GM12878 (cell line): ENCODE measurements at regions of chr4 and their contacts with region 1.

Region 1: GRCh38 chr4:128863312-128864075 is 54.0 kb downstream of the JADE1 start:
- DNase-seq: no peak
- ATAC-seq: peak; percentile 73
- H3K4me3 ChIP-seq: no peak overlapping the region; the same call in 1 of the 2 replicates
- H3K27ac ChIP-seq: peak overlapping the region; percentile 84
- H3K4me1 ChIP-seq: peaks cover 36% of the 10 kb centered on the region
- H3K27me3 ChIP-seq: no peaks in the 10 kb centered on the region
- CTCF ChIP-seq: peak; percentile 73 to 83 (median 81)
- EP300 ChIP-seq: no peak
- POLR2A ChIP-seq: no peak
- RAD21 ChIP-seq: peak; percentile 75

Region 2: DNA sequence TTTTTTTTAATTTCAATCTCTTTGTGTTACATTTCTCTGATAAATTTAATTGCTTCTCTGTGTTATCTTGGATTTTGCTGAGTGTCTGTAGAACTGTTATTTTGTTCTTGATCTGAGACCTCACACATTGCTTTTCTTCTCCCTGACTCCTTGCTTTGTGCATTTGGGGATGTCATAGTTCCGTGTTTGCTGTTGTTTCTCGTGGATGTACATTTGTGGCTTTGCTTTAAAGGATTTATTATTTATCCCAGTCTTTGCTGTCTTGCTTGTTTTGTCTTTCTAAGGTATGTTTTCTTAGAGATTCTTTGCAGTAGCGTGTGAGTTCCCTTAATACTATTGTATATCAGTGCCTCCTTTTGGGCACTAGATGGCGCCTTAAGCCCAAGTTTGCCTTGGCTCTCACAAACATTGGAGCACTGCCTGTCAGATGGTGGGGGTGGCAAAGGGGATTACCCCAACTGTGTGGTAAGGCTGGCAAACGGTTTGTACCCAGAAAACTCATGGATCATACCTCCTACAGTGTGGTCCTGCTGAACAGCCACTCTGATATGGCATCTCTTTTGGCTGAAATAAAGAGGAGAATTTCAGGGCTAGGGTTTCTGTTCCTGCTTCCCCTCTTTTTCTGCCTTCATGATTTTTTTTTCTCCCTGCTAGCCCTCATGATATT is 672.2 kb before region 1 on chr4:
- CTCF ChIA-PET with region 1: interaction called, 4 read pairs
- POLR2A ChIA-PET with region 1: no interaction called
- RAD21 ChIA-PET with region 1: no interaction called
- SMC1A ChIA-PET with region 1: interaction called, 4 read pairs
- in situ Hi-C with region 1: loop called (anchors 5 kb)
- intact Hi-C with region 1: loop called (anchors 1 kb)
- DNase-seq: peak; percentile 54
- ATAC-seq: peak; percentile 100
- H3K4me3 ChIP-seq: no peak overlapping the region
- H3K27ac ChIP-seq: no peak overlapping the region
- H3K4me1 ChIP-seq: peaks cover 2% of the 10 kb centered on the region; the same call in 1 of the 2 replicates
- H3K27me3 ChIP-seq: no peaks in the 10 kb centered on the region
- CTCF ChIP-seq: peak; percentile 79 to 97 (median 91); a peak in 5 of 6 replicates
- EP300 ChIP-seq: no peak
- POLR2A ChIP-seq: no peak
- RAD21 ChIP-seq: peak; percentile 94

Region 3: DNA sequence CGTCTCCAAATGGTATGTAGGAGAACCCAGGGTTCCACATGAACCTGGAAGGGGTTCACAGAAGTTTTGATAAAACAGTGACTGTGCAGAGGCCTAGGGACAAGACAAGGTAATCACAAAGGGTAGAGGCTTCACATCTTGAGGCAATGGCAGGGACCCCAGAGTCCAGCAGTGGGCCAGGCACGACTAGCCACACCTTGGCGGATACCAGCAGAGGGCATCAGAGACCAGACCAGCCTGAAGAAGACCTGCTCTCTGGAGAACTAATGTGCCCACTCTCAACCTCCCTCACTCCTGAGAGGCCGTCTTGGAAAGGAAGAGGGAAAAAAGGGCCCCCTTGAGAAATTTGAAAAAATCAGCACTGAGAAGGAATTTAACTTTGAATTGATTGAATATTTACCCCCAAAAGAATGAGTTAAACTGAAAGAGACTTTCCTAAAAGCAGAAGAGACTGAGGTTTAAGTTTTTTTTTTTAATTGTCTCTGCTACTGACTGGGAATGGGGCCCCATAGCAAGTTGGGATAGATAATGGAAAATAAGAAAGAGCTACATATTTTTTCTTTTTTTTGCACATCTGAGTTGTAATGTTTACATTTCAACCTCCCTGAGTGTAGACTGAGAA is 297.8 kb before region 1 on chr4:
- CTCF ChIA-PET with region 1: interaction called, 3 read pairs
- POLR2A ChIA-PET with region 1: no interaction called
- RAD21 ChIA-PET with region 1: no interaction called
- SMC1A ChIA-PET with region 1: no interaction called
- in situ Hi-C with region 1: loop called (anchors 5 kb)
- intact Hi-C with region 1: no loop called
- DNase-seq: no peak
- ATAC-seq: peak; percentile 92
- H3K4me3 ChIP-seq: no peak overlapping the region
- H3K27ac ChIP-seq: no peak overlapping the region
- H3K4me1 ChIP-seq: no peaks in the 10 kb centered on the region
- H3K27me3 ChIP-seq: no peaks in the 10 kb centered on the region; a peak in 1 of 4 replicates
- CTCF ChIP-seq: peak; percentile 49 to 71 (median 55)
- EP300 ChIP-seq: no peak
- POLR2A ChIP-seq: no peak
- RAD21 ChIP-seq: peak; percentile 69

Region 4: DNA sequence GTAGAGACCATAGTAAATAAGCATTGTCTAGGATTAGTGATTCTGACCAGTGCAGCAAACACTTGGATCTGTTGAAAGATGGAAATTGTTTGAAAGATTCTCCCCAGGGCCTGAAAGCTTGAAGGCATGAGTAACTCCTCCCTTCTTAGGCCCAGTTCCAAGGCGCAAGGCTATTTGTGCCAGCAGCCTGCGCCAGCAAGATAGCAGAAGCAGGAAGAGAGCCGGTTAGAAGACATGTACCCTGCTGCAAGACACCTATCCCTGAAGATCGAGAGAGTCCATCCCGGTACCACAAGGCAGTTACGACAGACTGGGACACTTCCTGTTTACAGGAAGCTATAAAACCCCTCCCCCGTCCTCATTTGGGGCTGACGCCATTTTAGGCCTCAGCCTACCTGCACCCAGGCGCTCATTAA is 126.4 kb before region 1 on chr4:
- CTCF ChIA-PET with region 1: no interaction called
- POLR2A ChIA-PET with region 1: no interaction called
- RAD21 ChIA-PET with region 1: no interaction called
- SMC1A ChIA-PET with region 1: no interaction called
- in situ Hi-C with region 1: no loop called
- intact Hi-C with region 1: no loop called
- DNase-seq: no peak
- ATAC-seq: no peak
- H3K4me3 ChIP-seq: no peak overlapping the region
- H3K27ac ChIP-seq: no peak overlapping the region
- H3K4me1 ChIP-seq: no peaks in the 10 kb centered on the region
- H3K27me3 ChIP-seq: no peaks in the 10 kb centered on the region
- CTCF ChIP-seq: no peak
- EP300 ChIP-seq: no peak
- POLR2A ChIP-seq: no peak
- RAD21 ChIP-seq: no peak

Region 5: GRCh38 chr4:128782076-128782715 is 81.3 kb before region 1 on chr4:
- CTCF ChIA-PET with region 1: interaction called, 10 read pairs
- POLR2A ChIA-PET with region 1: no interaction called
- RAD21 ChIA-PET with region 1: no interaction called
- SMC1A ChIA-PET with region 1: interaction called, 6 read pairs
- in situ Hi-C with region 1: no loop called
- intact Hi-C with region 1: loop called (anchors 1 kb)
- DNase-seq: no peak
- ATAC-seq: peak; percentile 88
- H3K4me3 ChIP-seq: no peak overlapping the region
- H3K27ac ChIP-seq: no peak overlapping the region
- H3K4me1 ChIP-seq: no peaks in the 10 kb centered on the region
- H3K27me3 ChIP-seq: no peaks in the 10 kb centered on the region
- CTCF ChIP-seq: peak; percentile 35 to 66 (median 47); a peak in 5 of 6 replicates
- EP300 ChIP-seq: no peak
- POLR2A ChIP-seq: no peak
- RAD21 ChIP-seq: peak; percentile 69

Region 6: GRCh38 chr4:128823025-128823661 is 40.4 kb before region 1 on chr4:
- CTCF ChIA-PET with region 1: interaction called, 14 read pairs
- POLR2A ChIA-PET with region 1: interaction called, 4 read pairs
- RAD21 ChIA-PET with region 1: interaction called, 9 read pairs
- SMC1A ChIA-PET with region 1: interaction called, 18 read pairs
- in situ Hi-C with region 1: no loop called
- intact Hi-C with region 1: no loop called
- DNase-seq: no peak
- ATAC-seq: no peak
- H3K4me3 ChIP-seq: no peak overlapping the region
- H3K27ac ChIP-seq: no peak overlapping the region
- H3K4me1 ChIP-seq: peaks cover 41% of the 10 kb centered on the region
- H3K27me3 ChIP-seq: no peaks in the 10 kb centered on the region
- CTCF ChIP-seq: no peak
- EP300 ChIP-seq: no peak
- POLR2A ChIP-seq: no peak
- RAD21 ChIP-seq: no peak

Region 7: GRCh38 chr4:128831531-128832242 is 31.8 kb before region 1 on chr4:
- CTCF ChIA-PET with region 1: interaction called, 14 read pairs
- POLR2A ChIA-PET with region 1: interaction called, 4 read pairs
- RAD21 ChIA-PET with region 1: interaction called, 17 read pairs
- SMC1A ChIA-PET with region 1: interaction called, 18 read pairs
- in situ Hi-C with region 1: no loop called
- intact Hi-C with region 1: no loop called
- DNase-seq: no peak
- ATAC-seq: peak; percentile 82
- H3K4me3 ChIP-seq: no peak overlapping the region
- H3K27ac ChIP-seq: peak overlapping the region; percentile 70
- H3K4me1 ChIP-seq: peaks cover 36% of the 10 kb centered on the region
- H3K27me3 ChIP-seq: no peaks in the 10 kb centered on the region
- CTCF ChIP-seq: no peak
- EP300 ChIP-seq: 0 out of 4 replicates have a peak, but pooled peaks of 1 of the 2 experiments have one; percentile 20
- POLR2A ChIP-seq: no peak
- RAD21 ChIP-seq: no peak

Region 8: GRCh38 chr4:128840711-128841318 is 22.7 kb before region 1 on chr4:
- CTCF ChIA-PET with region 1: interaction called, 7 read pairs
- POLR2A ChIA-PET with region 1: no interaction called
- RAD21 ChIA-PET with region 1: interaction called, 11 read pairs
- SMC1A ChIA-PET with region 1: interaction called, 7 read pairs
- in situ Hi-C with region 1: no loop called
- intact Hi-C with region 1: no loop called
- DNase-seq: no peak
- ATAC-seq: no peak
- H3K4me3 ChIP-seq: no peak overlapping the region
- H3K27ac ChIP-seq: no peak overlapping the region
- H3K4me1 ChIP-seq: no peaks in the 10 kb centered on the region
- H3K27me3 ChIP-seq: no peaks in the 10 kb centered on the region
- CTCF ChIP-seq: peak in 1 of 3 experiments; percentile 13; a peak in 1 of 6 replicates
- EP300 ChIP-seq: no peak
- POLR2A ChIP-seq: no peak
- RAD21 ChIP-seq: peak; percentile 34; the same call in 1 of the 2 replicates

Region 9: DNA sequence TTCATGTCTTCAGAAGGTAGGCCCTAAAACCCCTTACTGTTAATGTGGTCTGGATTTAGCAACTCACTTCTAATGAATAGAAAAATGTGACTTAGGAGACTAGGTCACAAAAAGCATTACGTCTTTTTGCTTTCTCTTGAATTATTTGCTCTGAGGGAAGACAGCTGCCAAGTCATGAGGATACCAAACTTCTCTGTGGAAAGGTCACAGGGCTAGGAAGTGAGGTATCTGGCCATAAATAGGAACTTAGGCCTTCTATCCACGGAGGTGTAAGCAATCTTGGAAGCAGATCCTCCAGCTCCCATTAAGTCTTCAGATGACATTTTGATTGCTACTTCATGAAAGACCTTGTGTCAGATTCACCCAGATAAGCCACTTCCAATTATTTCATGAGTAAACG is 66.6 kb after region 1 on chr4:
- CTCF ChIA-PET with region 1: no interaction called
- POLR2A ChIA-PET with region 1: no interaction called
- RAD21 ChIA-PET with region 1: no interaction called
- SMC1A ChIA-PET with region 1: no interaction called
- in situ Hi-C with region 1: no loop called
- intact Hi-C with region 1: no loop called
- DNase-seq: no peak
- ATAC-seq: no peak
- H3K4me3 ChIP-seq: no peak overlapping the region
- H3K27ac ChIP-seq: no peak overlapping the region
- H3K4me1 ChIP-seq: no peaks in the 10 kb centered on the region
- H3K27me3 ChIP-seq: no peaks in the 10 kb centered on the region
- CTCF ChIP-seq: no peak
- EP300 ChIP-seq: no peak
- POLR2A ChIP-seq: no peak
- RAD21 ChIP-seq: no peak

Region 10: DNA sequence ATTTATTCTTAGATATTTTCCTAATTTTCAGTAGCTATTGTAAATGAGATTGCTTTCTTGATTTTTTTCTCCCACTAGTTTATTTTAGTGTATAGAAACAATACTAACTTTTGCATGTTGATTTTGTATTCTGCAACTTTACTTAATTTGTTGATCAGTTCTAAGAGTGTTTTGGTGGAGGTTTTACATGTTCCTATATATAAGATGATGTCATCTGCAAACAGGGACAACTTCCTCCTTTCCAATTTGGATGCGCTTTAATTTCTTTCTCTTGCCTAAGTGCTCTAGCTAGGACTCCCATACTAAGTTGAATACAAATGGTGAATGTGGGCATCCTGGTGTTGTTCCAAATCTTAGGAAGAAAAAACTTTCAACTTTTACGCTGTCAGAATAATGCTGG is 193.1 kb after region 1 on chr4:
- CTCF ChIA-PET with region 1: no interaction called
- POLR2A ChIA-PET with region 1: no interaction called
- RAD21 ChIA-PET with region 1: no interaction called
- SMC1A ChIA-PET with region 1: no interaction called
- in situ Hi-C with region 1: no loop called
- intact Hi-C with region 1: no loop called
- DNase-seq: no peak
- ATAC-seq: no peak
- H3K4me3 ChIP-seq: no peak overlapping the region
- H3K27ac ChIP-seq: no peak overlapping the region
- H3K4me1 ChIP-seq: no peaks in the 10 kb centered on the region
- H3K27me3 ChIP-seq: no peaks in the 10 kb centered on the region
- CTCF ChIP-seq: no peak
- EP300 ChIP-seq: no peak
- POLR2A ChIP-seq: no peak
- RAD21 ChIP-seq: no peak